T-cell (primary cell): ENCODE measurements at regions of chr6 and their contacts with region 1.

Region 1: DNA sequence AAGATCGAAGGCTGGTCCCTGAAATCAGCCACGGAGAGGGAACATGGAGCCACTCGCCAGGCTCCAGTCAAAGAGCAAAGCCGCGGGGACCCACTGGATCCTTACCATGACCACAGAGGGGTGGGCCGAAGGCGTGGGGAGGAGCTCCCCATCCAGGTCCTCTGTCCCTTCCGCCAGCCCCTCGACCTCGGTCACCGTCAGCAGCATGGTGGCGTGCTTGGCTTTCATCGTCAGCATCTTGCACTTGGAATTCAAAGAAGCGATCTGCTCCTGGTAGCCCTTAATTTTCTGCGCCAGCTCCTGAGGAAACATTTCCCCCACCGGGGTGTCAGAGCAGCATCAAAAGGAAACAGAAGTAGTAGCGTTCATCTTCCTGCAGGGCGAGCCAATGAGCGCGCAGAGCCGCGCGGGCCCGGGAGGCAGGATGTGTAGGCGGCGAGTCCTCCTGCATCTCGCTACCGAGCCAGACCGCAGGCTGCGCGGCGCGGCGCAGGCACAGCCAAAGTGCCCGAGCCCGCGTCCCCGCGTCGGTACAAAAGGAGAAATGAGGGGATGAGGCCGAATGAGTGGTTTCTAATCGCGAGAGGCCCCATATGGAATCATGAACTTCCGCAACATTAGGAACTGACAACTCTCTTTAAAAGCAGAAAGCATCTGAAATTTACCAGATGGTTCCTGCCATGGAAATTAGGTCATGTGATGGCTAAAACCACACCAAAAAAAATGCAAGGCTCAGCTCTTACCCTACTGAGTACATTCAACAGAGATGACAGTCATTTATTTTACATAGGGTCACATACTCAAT is 335.2 kb downstream of the SYNE1 start:
- DNase-seq: peak; percentile 78 to 93 (median 86)
- ATAC-seq: peak; percentile 98
- H3K4me3 ChIP-seq: peak overlapping the region; percentile 92 to 99
- H3K4me3 Mint-ChIP-seq: peak overlapping the region; percentile 97 to 100 (median 100)
- H3K27ac ChIP-seq: peak overlapping the region; percentile 77
- H3K27ac Mint-ChIP-seq: peak overlapping the region; percentile 100
- H3K4me1 ChIP-seq: peaks cover 12 to 27% of the 10 kb centered on the region in 2 experiments
- H3K4me1 Mint-ChIP-seq: peaks cover 33 to 44% (median 41%) of the 10 kb centered on the region in 3 donors
- H3K27me3 ChIP-seq: no peaks in the 10 kb centered on the region
- H3K27me3 Mint-ChIP-seq: no peaks in the 10 kb centered on the region

Region 2: GRCh38 chr6:151618717-151619116 is 683.2 kb before region 1 on chr6:
- CTCF ChIA-PET with region 1: no interaction called
- POLR2A ChIA-PET with region 1: interaction called in 1 of 2 experiments, 10 read pairs
- DNase-seq: no peak
- ATAC-seq: no peak
- H3K4me3 ChIP-seq: no peak overlapping the region
- H3K4me3 Mint-ChIP-seq: no peak overlapping the region
- H3K27ac ChIP-seq: no peak overlapping the region
- H3K27ac Mint-ChIP-seq: no peak overlapping the region
- H3K4me1 ChIP-seq: no peaks in the 10 kb centered on the region
- H3K4me1 Mint-ChIP-seq: no peaks in the 10 kb centered on the region
- H3K27me3 ChIP-seq: no peaks in the 10 kb centered on the region
- H3K27me3 Mint-ChIP-seq: peaks cover 11 to 14% of the 10 kb centered on the region in 2 donors

Region 3: GRCh38 chr6:152146385-152146784 is 155.6 kb before region 1 on chr6:
- CTCF ChIA-PET with region 1: no interaction called
- POLR2A ChIA-PET with region 1: no interaction called
- DNase-seq: no peak
- ATAC-seq: no peak
- H3K4me3 ChIP-seq: no peak overlapping the region
- H3K4me3 Mint-ChIP-seq: no peak overlapping the region
- H3K27ac ChIP-seq: no peak overlapping the region
- H3K27ac Mint-ChIP-seq: no peak overlapping the region
- H3K4me1 ChIP-seq: no peaks in the 10 kb centered on the region
- H3K4me1 Mint-ChIP-seq: peaks cover 0 to 5% (median 3%) of the 10 kb centered on the region in 3 donors
- H3K27me3 ChIP-seq: no peaks in the 10 kb centered on the region
- H3K27me3 Mint-ChIP-seq: no peaks in the 10 kb centered on the region

Region 4: DNA sequence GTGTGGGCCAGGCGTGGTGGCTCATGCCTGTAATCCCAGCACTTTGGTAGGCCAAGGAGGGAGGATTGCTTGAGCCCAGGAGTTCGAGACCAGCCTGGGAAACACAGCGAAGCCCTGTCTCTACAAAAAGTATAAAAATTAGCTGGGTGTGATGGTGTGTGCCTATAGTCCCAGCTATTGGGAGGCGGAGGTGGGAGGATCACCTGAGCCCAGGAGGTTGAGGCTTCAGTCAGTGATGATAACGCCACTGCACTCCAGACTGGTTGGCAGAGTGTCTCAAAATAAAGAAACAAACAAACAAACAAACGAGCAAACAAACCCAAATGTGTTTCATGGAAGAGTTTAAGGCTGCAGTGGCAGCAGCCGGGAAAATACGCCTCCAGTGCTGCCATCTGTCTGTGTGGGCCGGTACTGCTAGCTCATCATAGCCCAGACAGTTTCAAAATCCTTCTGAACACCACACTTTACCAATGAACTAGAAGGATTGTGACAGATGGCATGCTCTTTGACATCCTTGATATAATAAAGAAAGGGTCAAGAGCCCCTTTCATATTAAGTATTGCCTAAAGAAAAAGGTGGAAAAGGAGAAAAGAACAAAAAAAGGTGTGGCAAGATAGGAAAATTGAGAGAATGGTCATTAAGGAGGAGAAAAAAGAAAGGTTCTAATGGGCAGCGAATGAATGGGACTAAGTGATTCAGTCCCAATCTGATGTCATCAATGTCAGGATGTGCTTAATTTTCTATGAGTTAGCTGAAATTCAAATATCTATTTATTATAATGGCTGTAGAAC is 36.6 kb after region 1 on chr6:
- CTCF ChIA-PET with region 1: interaction called, 18 to 56 read pairs
- POLR2A ChIA-PET with region 1: no interaction called
- DNase-seq: peak in 33 of 35 experiments; percentile 8 to 77 (median 40)
- ATAC-seq: peak; percentile 74 to 80 (median 77)
- H3K4me3 ChIP-seq: no peak overlapping the region
- H3K4me3 Mint-ChIP-seq: no peak overlapping the region
- H3K27ac ChIP-seq: no peak overlapping the region
- H3K27ac Mint-ChIP-seq: no peak overlapping the region
- H3K4me1 ChIP-seq: peaks cover 0 to 3% of the 10 kb centered on the region in 2 experiments
- H3K4me1 Mint-ChIP-seq: peaks cover 0 to 5% (median 4%) of the 10 kb centered on the region in 3 donors
- H3K27me3 ChIP-seq: no peaks in the 10 kb centered on the region
- H3K27me3 Mint-ChIP-seq: peaks cover 2 to 3% of the 10 kb centered on the region in 2 donors

Region 5: GRCh38 chr6:152356451-152357061 is 54.6 kb after region 1 on chr6:
- CTCF ChIA-PET with region 1: interaction called, 3 to 10 read pairs
- POLR2A ChIA-PET with region 1: no interaction called
- DNase-seq: peak in 5 of 35 experiments; percentile 3 to 54 (median 9)
- ATAC-seq: peak; percentile 45 to 58 (median 52)
- H3K4me3 ChIP-seq: no peak overlapping the region
- H3K4me3 Mint-ChIP-seq: no peak overlapping the region
- H3K27ac ChIP-seq: no peak overlapping the region
- H3K27ac Mint-ChIP-seq: no peak overlapping the region
- H3K4me1 ChIP-seq: no peaks in the 10 kb centered on the region
- H3K4me1 Mint-ChIP-seq: peaks cover 0 to 2% (median 0%) of the 10 kb centered on the region in 3 donors
- H3K27me3 ChIP-seq: no peaks in the 10 kb centered on the region
- H3K27me3 Mint-ChIP-seq: no peaks in the 10 kb centered on the region

Region 6: GRCh38 chr6:152391179-152391880 is 89.4 kb after region 1 on chr6:
- CTCF ChIA-PET with region 1: no interaction called
- POLR2A ChIA-PET with region 1: no interaction called
- DNase-seq: no peak
- ATAC-seq: no peak
- H3K4me3 ChIP-seq: no peak overlapping the region
- H3K4me3 Mint-ChIP-seq: no peak overlapping the region
- H3K27ac ChIP-seq: no peak overlapping the region
- H3K27ac Mint-ChIP-seq: no peak overlapping the region
- H3K4me1 ChIP-seq: no peaks in the 10 kb centered on the region
- H3K4me1 Mint-ChIP-seq: no peaks in the 10 kb centered on the region
- H3K27me3 ChIP-seq: no peaks in the 10 kb centered on the region
- H3K27me3 Mint-ChIP-seq: peaks cover 5 to 32% of the 10 kb centered on the region in 2 donors